Right cardiac atrium (tissue), 5 donors: ENCODE measurements at regions of chr7 and their contacts with region 1.

Region 1: GRCh38 chr7:99014113-99014985 is 129.6 kb downstream of the SMURF1 start:
- DNase-seq: peak in 2 of 3 donors; percentile 43 to 46
- ATAC-seq: peak; percentile 19 to 28
- H3K4me3 ChIP-seq: no peak overlapping the region
- H3K27ac ChIP-seq: no peak overlapping the region
- H3K4me1 ChIP-seq: no peaks in the 10 kb centered on the region
- H3K27me3 ChIP-seq: no peaks in the 10 kb centered on the region

Region 2: DNA sequence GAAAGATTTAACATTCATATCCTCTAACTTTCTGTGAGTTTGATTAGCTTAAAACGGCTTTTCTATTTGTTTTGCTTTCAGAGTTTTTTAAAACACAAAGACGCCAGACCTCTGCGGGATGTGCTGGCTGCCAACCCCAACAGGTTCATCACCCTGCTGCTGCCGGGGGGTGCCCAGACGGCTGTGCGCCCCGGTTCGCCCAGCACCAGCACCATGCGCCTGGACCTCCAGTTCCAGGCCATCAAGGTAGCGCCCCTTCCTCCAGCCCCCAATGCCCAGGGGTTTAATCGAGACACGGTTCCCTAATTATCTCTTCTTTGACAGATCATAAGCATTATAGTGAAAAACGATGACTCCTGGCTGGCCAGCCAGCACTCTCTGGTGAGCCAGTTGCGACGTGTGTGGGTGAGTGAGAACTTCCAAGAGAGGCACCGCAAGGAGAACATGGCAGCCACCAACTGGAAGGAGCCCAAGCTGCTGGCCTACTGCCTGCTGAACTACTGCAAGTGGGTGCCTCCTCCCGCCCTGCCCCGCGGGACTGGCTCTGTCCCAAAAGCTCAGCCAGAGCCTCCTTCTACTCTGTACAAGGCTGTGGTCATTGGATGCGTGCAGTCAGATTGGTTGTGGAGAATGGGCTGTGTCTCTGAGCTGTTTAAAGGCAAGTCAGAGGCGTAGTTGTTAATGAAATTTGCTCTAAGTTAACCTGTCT is 64.9 kb before region 1 on chr7:
- intact Hi-C with region 1: loop called in 1 of 4 experiments (anchors 10 kb)
- DNase-seq: peak; percentile 32 to 75 (median 69)
- ATAC-seq: peak; percentile 44 to 66
- H3K4me3 ChIP-seq: no peak overlapping the region
- H3K27ac ChIP-seq: no peak overlapping the region
- H3K4me1 ChIP-seq: peaks cover 2% of the 10 kb centered on the region
- H3K27me3 ChIP-seq: no peaks in the 10 kb centered on the region